ENCODE measurements at regions of chr18 and their contacts with region 1.

Region 1: GRCh38 chr18:75775121-75775520 is 347.6 kb upstream of the SMIM21 start:
- DNase-seq: no peak
- ATAC-seq: no peak
- H3K4me3 Mint-ChIP-seq: no peak overlapping the region
- H3K27ac Mint-ChIP-seq: no peak overlapping the region
- H3K4me1 Mint-ChIP-seq: no peaks in the 10 kb centered on the region
- H3K27me3 Mint-ChIP-seq: peaks cover 5% of the 10 kb centered on the region

Region 2: DNA sequence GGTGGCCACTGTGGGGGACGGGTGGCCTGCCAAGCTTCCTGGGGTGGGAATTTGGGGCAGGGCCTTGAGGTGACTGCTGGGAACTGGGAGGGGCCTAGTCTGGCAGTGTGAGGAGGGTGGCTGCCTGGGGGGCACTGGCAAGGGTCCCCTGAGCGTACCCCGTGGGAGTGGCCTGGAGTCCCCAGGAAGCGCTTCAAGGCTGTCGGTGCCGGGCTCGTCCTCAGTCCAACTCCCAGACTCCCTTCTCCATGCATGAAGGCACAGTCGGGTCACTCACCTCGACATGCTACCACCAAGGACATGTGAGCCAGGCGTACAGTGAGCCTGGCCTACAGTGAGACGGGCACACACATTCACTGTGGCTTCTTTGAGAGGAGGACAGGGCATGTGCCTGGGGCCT is 452.9 kb before region 1 on chr18:
- CTCF ChIA-PET with region 1: no interaction called
- POLR2A ChIA-PET with region 1: no interaction called
- intact Hi-C with region 1: no loop called
- DNase-seq: no peak
- ATAC-seq: no peak
- H3K4me3 Mint-ChIP-seq: no peak overlapping the region
- H3K27ac Mint-ChIP-seq: no peak overlapping the region
- H3K4me1 Mint-ChIP-seq: no peaks in the 10 kb centered on the region
- H3K27me3 Mint-ChIP-seq: peaks cover 4% of the 10 kb centered on the region

Region 3: GRCh38 chr18:75757951-75758350 is 17.2 kb before region 1 on chr18:
- CTCF ChIA-PET with region 1: no interaction called
- POLR2A ChIA-PET with region 1: no interaction called
- intact Hi-C with region 1: loop called in 1 of 2 experiments (anchors 1 kb)
- DNase-seq: no peak
- ATAC-seq: no peak
- H3K4me3 Mint-ChIP-seq: no peak overlapping the region
- H3K27ac Mint-ChIP-seq: no peak overlapping the region
- H3K4me1 Mint-ChIP-seq: no peaks in the 10 kb centered on the region
- H3K27me3 Mint-ChIP-seq: peaks cover 10% of the 10 kb centered on the region